Naive thymus-derived CD4-positive, alpha-beta T cell (primary cell): ENCODE measurements at regions of chr19 and their contacts with region 1.

Region 1: DNA sequence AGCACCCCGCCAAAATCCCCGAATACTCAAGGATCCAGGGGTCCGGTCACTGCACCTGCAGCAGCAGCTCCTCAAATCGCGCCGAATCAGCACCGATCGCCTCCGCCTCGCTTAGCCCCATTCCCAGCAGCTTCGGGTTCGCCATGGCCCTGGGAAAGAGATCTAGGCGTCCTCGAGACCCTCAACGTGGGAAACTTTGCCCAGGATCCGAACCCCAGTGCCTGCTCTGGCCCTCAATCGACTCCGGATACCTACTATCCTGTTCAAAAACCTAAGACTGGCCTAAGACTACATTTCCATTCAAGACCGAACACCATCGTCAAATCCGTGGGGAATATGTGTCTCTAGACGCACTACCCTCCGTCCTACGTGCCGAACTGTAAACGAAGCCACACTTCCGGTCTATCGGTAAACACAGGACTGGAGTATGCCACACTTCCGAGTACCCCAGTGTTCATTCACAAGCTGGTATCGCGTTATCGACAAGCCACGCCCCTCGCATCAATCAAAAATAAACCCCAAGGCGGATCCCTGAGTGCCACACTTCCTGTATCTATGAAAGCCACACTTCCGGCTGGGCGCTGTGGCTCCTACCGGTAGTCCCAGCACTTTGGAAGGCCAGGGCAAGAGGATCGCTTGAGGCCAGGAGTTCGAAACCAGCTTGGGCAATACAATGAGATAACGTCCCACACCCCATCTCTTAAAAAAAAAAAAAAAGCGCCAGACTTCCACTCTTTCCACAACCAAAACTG is at the start of gene PIH1D1:
- DNase-seq: peak; percentile 69 to 97 (median 94)
- ATAC-seq: peak; percentile 71
- H3K4me3 ChIP-seq: peak within 1 kb of the TSS; percentile 85
- H3K4me3 Mint-ChIP-seq: peak within 1 kb of the TSS; percentile 95 to 100 (median 99)
- H3K27ac ChIP-seq: peak within 1 kb of the TSS; percentile 95
- H3K27ac Mint-ChIP-seq: peak within 1 kb of the TSS; percentile 92 to 100 (median 99)
- H3K4me1 ChIP-seq: peaks cover 15 to 26% of the 10 kb centered on the region in 2 donors
- H3K4me1 Mint-ChIP-seq: peaks cover 31 to 68% (median 55%) of the 10 kb centered on the region in 7 donors
- H3K27me3 ChIP-seq: no peaks in the 10 kb centered on the region
- H3K27me3 Mint-ChIP-seq: no peaks in the 10 kb centered on the region
- total RNA-seq, gene PIH1D1: 136 to 183 (median 159) TPM

Region 2: GRCh38 chr19:49085020-49085867 is 366.4 kb before region 1 on chr19 and contains the start of gene SNRNP70:
- CTCF ChIA-PET with region 1: no interaction called
- POLR2A ChIA-PET with region 1: interaction called, 3 read pairs
- intact Hi-C with region 1: loop called (anchors 1 kb)
- DNase-seq: peak; percentile 99 to 100 (median 100)
- ATAC-seq: peak; percentile 97
- H3K4me3 ChIP-seq: peak within 1 kb of the TSS; percentile 72
- H3K4me3 Mint-ChIP-seq: peak within 1 kb of the TSS; percentile 71 to 97 (median 94)
- H3K27ac ChIP-seq: peak within 1 kb of the TSS; percentile 94
- H3K27ac Mint-ChIP-seq: peak within 1 kb of the TSS; percentile 83 to 96 (median 88)
- H3K4me1 ChIP-seq: peaks cover 19% of the 10 kb centered on the region in 2 donors
- H3K4me1 Mint-ChIP-seq: peaks cover 18 to 49% (median 35%) of the 10 kb centered on the region in 7 donors
- H3K27me3 ChIP-seq: no peaks in the 10 kb centered on the region
- H3K27me3 Mint-ChIP-seq: peaks cover 0 to 5% (median 4%) of the 10 kb centered on the region in 5 donors
- total RNA-seq, gene SNRNP70: 243 to 837 (median 449) TPM

Region 3: DNA sequence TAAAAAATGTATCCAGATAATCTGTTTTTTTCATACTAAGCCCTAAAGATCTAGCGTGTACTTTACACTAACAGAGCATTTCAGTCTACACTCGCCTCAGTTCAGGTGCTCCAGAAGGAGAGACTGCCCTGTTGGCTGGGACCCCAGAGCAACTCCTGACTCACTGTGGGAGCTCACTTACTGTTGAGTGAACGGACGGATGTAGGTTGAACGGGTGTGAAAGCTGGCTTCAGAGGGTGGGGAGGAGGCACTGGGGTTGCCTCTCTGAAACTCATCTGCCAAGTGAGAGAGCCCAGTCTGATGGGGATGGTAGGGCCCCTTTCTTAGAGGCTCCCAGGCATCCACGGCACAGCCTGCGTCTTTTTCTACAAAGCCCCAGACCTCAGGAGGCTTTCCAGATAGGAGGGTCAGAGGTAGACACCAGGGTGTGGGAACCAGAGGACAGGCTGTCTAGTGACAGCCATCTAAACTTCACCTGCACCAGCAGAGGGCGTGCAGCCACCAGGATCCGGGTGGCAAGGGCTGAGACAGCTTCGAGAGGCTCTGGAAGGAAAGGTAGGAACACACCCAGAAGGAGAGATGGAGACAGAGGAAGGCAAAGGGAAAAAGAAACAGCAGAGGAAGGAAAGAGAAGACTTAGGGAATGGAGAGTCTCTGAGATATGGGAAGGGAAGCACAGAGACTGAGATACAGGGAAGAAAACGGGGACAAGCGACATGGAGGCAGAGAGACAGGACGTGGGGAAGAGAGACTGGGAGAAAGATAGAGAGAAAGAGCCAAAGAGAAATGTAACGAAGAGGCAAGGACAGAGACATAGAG is 59.8 kb before region 1 on chr19:
- CTCF ChIA-PET with region 1: interaction called, 12 read pairs
- POLR2A ChIA-PET with region 1: interaction called, 13 read pairs
- intact Hi-C with region 1: no loop called
- DNase-seq: peak; percentile 61 to 82 (median 74)
- ATAC-seq: peak; percentile 89
- H3K4me3 ChIP-seq: no peak overlapping the region
- H3K4me3 Mint-ChIP-seq: peak overlapping the region in 2 of 10 donors; percentile 3 to 51
- H3K27ac ChIP-seq: no peak overlapping the region
- H3K27ac Mint-ChIP-seq: peak overlapping the region in 6 of 9 donors; percentile 1 to 84 (median 54)
- H3K4me1 ChIP-seq: peaks cover 7 to 13% of the 10 kb centered on the region in 2 donors
- H3K4me1 Mint-ChIP-seq: peaks cover 6 to 26% (median 10%) of the 10 kb centered on the region in 7 donors
- H3K27me3 ChIP-seq: no peaks in the 10 kb centered on the region
- H3K27me3 Mint-ChIP-seq: peaks cover 0 to 11% (median 3%) of the 10 kb centered on the region in 5 donors

Region 4: DNA sequence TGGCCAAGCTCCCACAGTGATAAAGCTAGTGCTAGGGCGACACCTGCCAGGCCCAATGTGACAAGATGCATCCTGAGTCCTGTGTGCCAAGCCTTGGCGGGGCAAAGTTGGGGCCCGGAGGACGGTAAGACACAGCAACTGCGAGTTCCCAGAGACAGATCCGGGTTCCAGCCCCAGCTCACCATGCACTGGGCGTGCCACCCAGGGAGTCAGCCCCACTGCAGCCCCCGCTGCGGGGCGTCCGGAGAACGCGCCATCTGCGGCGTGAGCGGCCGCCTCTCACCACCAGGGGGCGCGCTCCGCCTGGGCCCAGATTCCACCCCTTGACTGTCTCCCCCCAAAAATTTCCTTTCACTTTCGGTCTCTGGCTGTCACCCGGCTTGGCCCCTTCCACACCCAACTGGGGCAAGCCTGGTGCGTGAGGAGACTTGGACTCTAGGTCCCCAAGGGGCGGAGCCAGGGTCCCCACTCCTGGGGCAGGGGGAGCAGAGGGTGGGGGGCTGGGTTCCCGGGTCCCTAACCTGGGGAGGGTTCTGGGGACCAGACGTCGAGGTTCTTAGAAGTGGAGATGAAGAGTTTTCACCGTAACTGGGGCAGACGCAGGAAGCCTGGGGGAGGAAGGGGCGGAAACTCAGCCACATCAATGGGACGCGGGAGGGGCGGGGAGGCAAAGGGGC is 22.4 kb after region 1 on chr19 and contains the start of gene FLT3LG:
- CTCF ChIA-PET with region 1: interaction called, 83 read pairs
- POLR2A ChIA-PET with region 1: interaction called, 226 read pairs
- intact Hi-C with region 1: loop called (anchors 1 kb)
- DNase-seq: peak; percentile 91 to 98 (median 96)
- ATAC-seq: peak; percentile 72
- H3K4me3 ChIP-seq: peak within 1 kb of the TSS; percentile 87
- H3K4me3 Mint-ChIP-seq: peak within 1 kb of the TSS; percentile 91 to 100 (median 96)
- H3K27ac ChIP-seq: peak within 1 kb of the TSS; percentile 99
- H3K27ac Mint-ChIP-seq: peak within 1 kb of the TSS; percentile 95 to 100 (median 98)
- H3K4me1 ChIP-seq: peaks cover 50 to 52% of the 10 kb centered on the region in 2 donors
- H3K4me1 Mint-ChIP-seq: peaks cover 18 to 62% (median 51%) of the 10 kb centered on the region in 7 donors
- H3K27me3 ChIP-seq: no peaks in the 10 kb centered on the region
- H3K27me3 Mint-ChIP-seq: no peaks in the 10 kb centered on the region
- total RNA-seq, gene FLT3LG: 90.6 to 401 (median 280) TPM

Region 5: GRCh38 chr19:49497047-49497788 is 45.6 kb after region 1 on chr19:
- CTCF ChIA-PET with region 1: no interaction called
- POLR2A ChIA-PET with region 1: interaction called, 45 read pairs
- intact Hi-C with region 1: loop called (anchors 1 kb)
- DNase-seq: peak; percentile 55 to 85 (median 77)
- ATAC-seq: peak; percentile 20
- H3K4me3 ChIP-seq: peak overlapping the region; percentile 97
- H3K4me3 Mint-ChIP-seq: peak overlapping the region; percentile 96 to 100 (median 99)
- H3K27ac ChIP-seq: peak overlapping the region; percentile 99
- H3K27ac Mint-ChIP-seq: peak overlapping the region; percentile 91 to 100 (median 98)
- H3K4me1 ChIP-seq: peaks cover 21 to 40% of the 10 kb centered on the region in 2 donors
- H3K4me1 Mint-ChIP-seq: peaks cover 32 to 64% (median 50%) of the 10 kb centered on the region in 7 donors
- H3K27me3 ChIP-seq: no peaks in the 10 kb centered on the region
- H3K27me3 Mint-ChIP-seq: peaks cover 0 to 12% (median 0%) of the 10 kb centered on the region in 5 donors

Region 6: DNA sequence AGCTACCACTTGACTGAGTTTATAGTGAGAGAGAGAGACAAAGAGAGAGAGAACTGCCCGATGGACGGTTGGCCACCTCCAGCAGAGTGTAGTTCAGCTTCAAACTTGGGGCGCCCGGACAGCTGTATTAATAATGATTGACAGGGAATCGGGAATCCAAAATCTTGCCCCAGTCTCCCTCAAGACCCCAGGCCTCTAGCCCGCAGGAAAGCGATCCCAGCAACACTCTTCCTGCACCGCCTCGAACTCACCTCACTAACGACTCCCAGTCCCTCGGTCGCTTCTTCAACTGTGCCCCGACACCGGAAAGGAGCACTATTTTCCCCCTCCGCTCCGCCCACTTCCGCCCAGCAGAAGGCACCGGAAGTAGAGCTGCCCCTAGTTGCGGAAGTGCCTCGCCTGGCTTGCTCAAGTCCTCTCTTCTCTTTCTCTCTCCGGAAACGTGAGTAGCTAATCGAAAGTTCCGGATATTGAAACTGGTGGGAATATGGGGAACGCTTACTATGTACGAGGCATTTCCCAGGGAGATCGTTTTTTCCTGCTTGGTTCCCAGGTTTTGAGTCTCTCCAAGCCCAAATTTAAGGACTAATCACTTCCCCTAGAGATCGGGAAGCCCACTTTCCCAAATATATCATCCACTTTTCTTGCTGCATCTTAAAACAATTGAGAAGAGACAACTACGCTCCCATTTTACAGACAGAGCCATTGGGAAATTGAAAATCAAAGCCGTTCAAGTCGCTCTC is 128.8 kb after region 1 on chr19 and contains the start of gene NOSIP:
- CTCF ChIA-PET with region 1: interaction called, 5 read pairs
- POLR2A ChIA-PET with region 1: interaction called, 11 read pairs
- intact Hi-C with region 1: no loop called
- DNase-seq: peak; percentile 88 to 96 (median 94)
- ATAC-seq: peak; percentile 100
- H3K4me3 ChIP-seq: peak within 1 kb of the TSS; percentile 68
- H3K4me3 Mint-ChIP-seq: peak within 1 kb of the TSS; percentile 91 to 98 (median 94)
- H3K27ac ChIP-seq: peak within 1 kb of the TSS; percentile 84
- H3K27ac Mint-ChIP-seq: peak within 1 kb of the TSS; percentile 85 to 98 (median 92)
- H3K4me1 ChIP-seq: peaks cover 0 to 22% of the 10 kb centered on the region in 2 donors
- H3K4me1 Mint-ChIP-seq: peaks cover 20 to 49% (median 36%) of the 10 kb centered on the region in 7 donors
- H3K27me3 ChIP-seq: no peaks in the 10 kb centered on the region
- H3K27me3 Mint-ChIP-seq: no peaks in the 10 kb centered on the region
- total RNA-seq, gene NOSIP: 222 to 267 (median 228) TPM

Region 7: DNA sequence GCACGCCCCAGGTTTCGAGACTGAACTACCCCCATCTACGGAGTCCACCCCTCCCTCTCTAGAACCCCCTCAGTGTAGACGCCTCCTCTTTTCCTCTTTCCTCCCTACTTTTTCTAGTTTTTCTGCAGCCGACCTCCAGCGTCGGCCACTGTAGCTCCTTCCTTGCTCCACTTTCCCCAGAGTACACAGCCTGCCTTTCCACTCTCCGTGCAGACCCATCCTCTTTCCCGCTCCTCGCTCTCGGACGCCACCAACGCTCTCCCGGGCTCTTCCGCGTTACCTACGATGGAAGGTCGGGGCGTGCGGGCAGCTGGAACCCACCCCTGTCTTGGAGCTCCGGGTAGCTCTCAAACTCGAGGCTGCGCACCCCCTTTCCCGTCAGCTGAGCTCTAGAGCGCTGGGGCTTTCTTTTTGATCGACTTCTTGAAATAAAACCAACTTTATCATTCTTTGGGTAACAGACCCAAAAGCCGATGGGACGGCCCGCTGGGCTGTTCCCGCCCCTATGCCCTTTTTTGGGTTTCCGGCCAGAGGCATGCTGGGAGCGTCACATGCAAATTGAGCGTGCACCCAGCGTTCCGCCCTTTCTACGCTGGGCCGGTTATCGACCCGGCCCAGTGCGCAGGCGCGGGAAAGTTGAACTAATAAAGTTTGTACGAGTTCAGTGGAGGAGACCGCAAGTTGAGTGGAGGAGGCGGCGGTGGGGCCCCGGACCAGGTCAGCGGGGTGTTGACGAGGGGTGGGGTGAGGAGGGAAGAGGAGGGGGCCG is 213.9 kb after region 1 on chr19 and contains the starts of genes BCL2L12 and IRF3:
- CTCF ChIA-PET with region 1: no interaction called
- POLR2A ChIA-PET with region 1: interaction called, 5 read pairs
- intact Hi-C with region 1: loop called in 1 of 2 experiments (anchors 1 kb)
- DNase-seq: peak; percentile 99
- ATAC-seq: peak; percentile 90
- H3K4me3 ChIP-seq: peak within 1 kb of the TSS; percentile 95
- H3K4me3 Mint-ChIP-seq: peak within 1 kb of the TSS; percentile 97 to 100 (median 99)
- H3K27ac ChIP-seq: peak within 1 kb of the TSS; percentile 80
- H3K27ac Mint-ChIP-seq: peak within 1 kb of the TSS; percentile 96 to 99 (median 97)
- H3K4me1 ChIP-seq: peaks cover 23% of the 10 kb centered on the region in 2 donors
- H3K4me1 Mint-ChIP-seq: peaks cover 24 to 47% (median 39%) of the 10 kb centered on the region in 7 donors
- H3K27me3 ChIP-seq: no peaks in the 10 kb centered on the region
- H3K27me3 Mint-ChIP-seq: peaks cover 0 to 2% (median 0%) of the 10 kb centered on the region in 5 donors
- total RNA-seq, gene BCL2L12: 11.3 to 57.2 (median 22.6) TPM
- total RNA-seq, gene IRF3: 176 to 346 (median 212) TPM

Region 8: DNA sequence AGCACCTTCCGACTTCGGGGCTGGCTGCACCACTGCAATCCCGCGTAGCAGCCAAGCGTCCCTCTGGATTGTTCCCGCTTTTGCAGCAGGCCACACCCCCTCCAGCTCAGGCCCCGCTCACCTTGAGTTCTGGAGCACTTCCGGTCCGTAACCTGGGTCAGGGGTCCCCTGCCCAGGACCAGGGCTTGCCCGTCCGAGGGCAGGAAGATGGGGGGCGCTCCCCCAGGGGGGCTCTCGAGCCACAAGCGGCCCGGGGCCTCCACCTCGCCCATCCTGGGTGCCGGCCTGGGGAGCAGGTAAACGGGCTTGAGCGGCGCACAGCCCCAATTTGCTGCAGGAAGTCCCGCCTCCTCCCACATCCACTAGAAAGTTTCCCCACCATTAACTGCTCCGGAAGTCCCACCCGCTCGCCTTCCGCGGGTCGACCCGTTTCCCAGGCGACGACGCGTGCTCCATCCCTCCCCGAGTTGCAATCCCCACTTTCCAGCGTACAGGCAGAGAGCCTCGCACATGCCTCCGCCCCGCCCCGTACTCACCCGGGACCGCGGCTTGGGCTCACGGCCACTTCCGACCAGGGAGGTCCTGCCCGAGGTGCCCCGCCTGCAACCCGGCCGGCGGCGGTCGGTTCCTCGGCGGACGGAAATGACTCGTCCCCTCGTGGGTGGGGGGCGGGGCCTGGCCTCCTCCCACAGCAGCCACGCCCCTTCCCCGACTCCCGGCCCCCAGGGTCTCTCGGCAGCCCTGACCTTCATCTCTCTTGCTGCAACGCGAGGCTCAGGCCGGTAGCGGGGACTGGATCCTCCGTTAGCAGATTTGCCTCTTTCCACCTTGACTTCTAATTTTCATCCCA is 415.6 kb after region 1 on chr19 and contains the start of gene PNKP:
- CTCF ChIA-PET with region 1: no interaction called
- POLR2A ChIA-PET with region 1: no interaction called
- intact Hi-C with region 1: no loop called
- DNase-seq: peak; percentile 79 to 92 (median 84)
- ATAC-seq: peak; percentile 69
- H3K4me3 ChIP-seq: peak within 1 kb of the TSS; percentile 93
- H3K4me3 Mint-ChIP-seq: peak within 1 kb of the TSS in 1 of 10 donors; percentile 100
- H3K27ac ChIP-seq: peak within 1 kb of the TSS; percentile 85
- H3K27ac Mint-ChIP-seq: peak within 1 kb of the TSS in 4 of 9 donors; percentile 94 to 99 (median 97)
- H3K4me1 ChIP-seq: peaks cover 31 to 38% of the 10 kb centered on the region in 2 donors
- H3K4me1 Mint-ChIP-seq: peaks cover 30 to 56% (median 48%) of the 10 kb centered on the region in 7 donors
- H3K27me3 ChIP-seq: no peaks in the 10 kb centered on the region
- H3K27me3 Mint-ChIP-seq: no peaks in the 10 kb centered on the region
- total RNA-seq, gene PNKP: 141 to 174 (median 154) TPM